PC-9 (cell line): ENCODE measurements at regions of chr19 and their contacts with region 1.

Region 1: DNA sequence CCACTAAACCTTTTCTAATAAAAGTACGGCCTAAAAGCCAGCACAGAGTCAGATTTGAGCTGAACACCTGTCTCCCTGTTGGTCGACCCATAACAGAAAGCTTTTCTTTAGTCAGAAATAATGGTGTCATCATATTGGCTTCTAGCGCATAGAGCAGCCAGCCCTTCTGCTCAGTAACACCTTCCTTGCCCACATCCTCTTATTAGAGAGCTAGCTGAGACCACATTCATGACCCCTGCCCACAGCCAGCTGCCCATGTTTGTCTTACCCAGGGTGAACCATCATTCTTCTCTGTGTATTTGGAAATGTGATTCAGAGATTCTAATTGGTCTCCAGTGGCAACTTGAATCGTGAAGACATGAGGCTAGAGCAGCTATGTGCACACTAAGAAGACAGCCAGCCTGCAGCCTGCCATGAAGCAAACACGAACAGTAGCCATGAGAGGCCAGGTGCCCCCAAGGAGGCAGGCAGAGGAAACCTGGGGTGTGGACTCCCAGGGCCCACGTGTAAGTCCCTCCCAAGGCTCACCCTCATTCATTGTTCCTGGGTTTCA is 82.3 kb upstream of the PDCD5 start:
- DNase-seq: peak in 1 of 2 experiments; percentile 23
- H3K4me3 ChIP-seq: no peak overlapping the region
- H3K27ac ChIP-seq: no peak overlapping the region
- H3K4me1 ChIP-seq: no peaks in the 10 kb centered on the region
- H3K27me3 ChIP-seq: peaks cover 67% of the 10 kb centered on the region
- CTCF ChIP-seq: no peak

Region 2: GRCh38 chr19:32532233-32532632 is 33.5 kb after region 1 on chr19:
- CTCF ChIA-PET with region 1: no interaction called
- POLR2A ChIA-PET with region 1: no interaction called
- intact Hi-C with region 1: no loop called
- DNase-seq: no peak
- H3K4me3 ChIP-seq: no peak overlapping the region
- H3K27ac ChIP-seq: no peak overlapping the region
- H3K4me1 ChIP-seq: no peaks in the 10 kb centered on the region
- H3K27me3 ChIP-seq: peaks cover 80% of the 10 kb centered on the region
- CTCF ChIP-seq: no peak

Region 3: DNA sequence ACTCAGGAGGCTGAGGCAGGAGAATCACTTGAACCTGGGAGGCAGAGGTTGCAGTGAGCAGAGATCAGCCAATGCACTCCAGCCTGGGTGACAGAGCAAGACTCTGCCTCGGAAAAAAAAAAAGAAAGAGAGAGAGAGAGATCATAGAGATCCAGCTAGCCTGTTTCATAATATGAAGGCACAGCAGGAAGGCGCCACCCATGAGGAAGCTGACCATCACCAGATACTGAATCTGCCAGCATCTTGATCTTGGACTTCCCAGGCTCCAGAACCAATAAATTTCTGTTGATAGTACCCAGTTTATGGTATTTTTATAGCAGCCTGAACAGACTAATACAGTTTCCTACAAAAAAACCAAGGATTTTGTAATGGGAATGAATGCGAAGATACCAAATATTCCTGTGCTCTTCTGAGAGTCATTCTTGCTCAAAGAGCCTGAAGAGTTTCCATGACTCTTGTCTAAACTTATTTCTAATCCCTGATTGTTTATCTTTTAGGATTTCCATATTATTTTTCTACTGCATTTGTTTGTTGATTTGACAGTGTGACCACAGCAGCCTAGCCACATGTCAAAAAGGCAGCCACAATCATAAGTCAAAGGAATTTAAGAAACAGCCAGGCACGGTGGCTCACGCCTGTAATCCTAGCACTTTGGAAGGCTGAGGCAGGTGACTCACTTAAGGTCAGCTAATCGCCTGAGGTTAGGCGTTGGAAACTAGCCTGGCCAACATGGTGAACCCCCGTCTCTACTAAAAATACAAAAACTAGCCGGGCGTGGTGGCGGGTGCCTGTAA is 44.6 kb after region 1 on chr19:
- CTCF ChIA-PET with region 1: no interaction called
- POLR2A ChIA-PET with region 1: no interaction called
- intact Hi-C with region 1: loop called (anchors 2 kb)
- DNase-seq: peak; percentile 59 to 89
- H3K4me3 ChIP-seq: no peak overlapping the region
- H3K27ac ChIP-seq: no peak overlapping the region
- H3K4me1 ChIP-seq: peaks cover 12% of the 10 kb centered on the region
- H3K27me3 ChIP-seq: peaks cover 38% of the 10 kb centered on the region
- CTCF ChIP-seq: no peak

Region 4: GRCh38 chr19:32702075-32702474 is 203.4 kb after region 1 on chr19:
- CTCF ChIA-PET with region 1: no interaction called
- POLR2A ChIA-PET with region 1: no interaction called
- intact Hi-C with region 1: no loop called
- DNase-seq: no peak
- H3K4me3 ChIP-seq: no peak overlapping the region
- H3K27ac ChIP-seq: no peak overlapping the region
- H3K4me1 ChIP-seq: peaks cover 6% of the 10 kb centered on the region; the same call in 1 of the 2 replicates
- H3K27me3 ChIP-seq: no peaks in the 10 kb centered on the region
- CTCF ChIP-seq: no peak